Aorta (tissue), 5 donors: ENCODE measurements at regions of chr2 and their contacts with region 1.

Region 1: DNA sequence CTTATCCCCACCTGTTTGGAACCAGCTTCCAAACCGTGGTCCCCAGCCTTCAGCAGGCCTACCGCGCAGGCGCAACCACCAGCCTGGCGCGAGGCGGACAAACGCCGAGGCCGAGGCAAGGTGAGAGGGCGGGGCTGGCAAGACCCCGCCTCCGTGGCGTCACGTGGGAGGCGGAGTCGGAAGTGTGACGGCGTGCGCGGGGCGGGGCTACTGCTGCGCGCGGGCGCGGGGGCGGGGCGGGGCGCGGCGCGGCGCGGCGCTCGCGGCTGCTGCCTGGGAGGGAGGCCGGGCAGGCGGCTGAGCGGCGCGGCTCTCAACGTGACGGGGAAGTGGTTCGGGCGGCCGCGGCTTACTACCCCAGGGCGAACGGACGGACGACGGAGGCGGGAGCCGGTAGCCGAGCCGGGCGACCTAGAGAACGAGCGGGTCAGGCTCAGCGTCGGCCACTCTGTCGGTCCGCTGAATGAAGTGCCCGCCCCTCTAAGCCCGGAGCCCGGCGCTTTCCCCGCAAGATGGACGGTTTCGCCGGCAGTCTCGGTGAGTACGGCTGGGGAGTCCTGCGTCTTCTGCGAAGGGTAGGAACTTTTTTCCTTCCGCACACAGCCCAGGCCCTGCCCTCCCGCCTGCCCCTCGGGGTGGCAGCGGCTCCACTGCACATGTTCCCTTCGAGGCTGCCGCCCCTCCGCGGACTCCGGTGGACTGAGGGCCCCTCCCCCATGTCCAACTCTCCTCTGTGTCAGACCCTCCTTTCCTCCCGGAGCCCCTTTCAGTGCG is at the start of gene EML4:
- DNase-seq: peak; percentile 92 to 97
- ATAC-seq: peak; percentile 97
- H3K4me3 ChIP-seq: peak within 1 kb of the TSS; percentile 68 to 69
- H3K27ac ChIP-seq: peak within 1 kb of the TSS; percentile 1 to 62
- H3K4me1 ChIP-seq: peaks cover 0 to 4% of the 10 kb centered on the region in 2 donors
- H3K27me3 ChIP-seq: no peaks in the 10 kb centered on the region
- total RNA-seq, gene EML4: 41.9 to 51.9 TPM

Region 2: DNA sequence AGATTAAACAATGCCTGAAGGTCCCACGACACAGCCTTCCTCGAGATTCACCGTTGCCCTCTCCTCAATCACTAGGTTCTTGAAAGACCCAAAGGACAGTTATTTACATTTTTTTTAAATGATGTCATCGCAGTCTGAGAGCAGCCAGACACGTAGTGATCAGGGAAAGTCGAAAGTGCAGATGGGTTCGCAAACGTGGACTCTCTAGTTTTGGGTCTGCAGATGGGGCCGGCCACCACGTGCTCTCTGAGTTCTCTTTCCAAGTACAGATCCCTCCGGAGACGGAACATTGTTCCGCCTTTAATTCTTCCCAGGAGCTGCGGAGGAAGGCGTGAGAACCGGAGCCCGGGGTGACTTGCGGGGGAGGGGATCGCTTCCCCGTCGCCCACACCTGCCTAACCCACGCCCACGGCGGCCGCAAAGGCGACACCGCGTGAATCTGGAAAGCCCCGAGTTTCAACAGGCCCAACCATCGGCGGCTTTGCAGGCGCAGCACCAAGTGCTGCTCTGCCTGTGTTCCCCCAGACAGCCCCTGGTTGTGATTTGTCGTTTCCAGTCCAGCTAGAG is 67.2 kb before region 1 on chr2:
- intact Hi-C with region 1: loop called in 1 of 2 experiments (anchors 10 kb)
- DNase-seq: peak; percentile 78 to 86
- ATAC-seq: peak; percentile 64
- H3K4me3 ChIP-seq: no peak overlapping the region
- H3K27ac ChIP-seq: peak overlapping the region; percentile 1 to 78
- H3K4me1 ChIP-seq: no peaks in the 10 kb centered on the region
- H3K27me3 ChIP-seq: no peaks in the 10 kb centered on the region

Region 3: DNA sequence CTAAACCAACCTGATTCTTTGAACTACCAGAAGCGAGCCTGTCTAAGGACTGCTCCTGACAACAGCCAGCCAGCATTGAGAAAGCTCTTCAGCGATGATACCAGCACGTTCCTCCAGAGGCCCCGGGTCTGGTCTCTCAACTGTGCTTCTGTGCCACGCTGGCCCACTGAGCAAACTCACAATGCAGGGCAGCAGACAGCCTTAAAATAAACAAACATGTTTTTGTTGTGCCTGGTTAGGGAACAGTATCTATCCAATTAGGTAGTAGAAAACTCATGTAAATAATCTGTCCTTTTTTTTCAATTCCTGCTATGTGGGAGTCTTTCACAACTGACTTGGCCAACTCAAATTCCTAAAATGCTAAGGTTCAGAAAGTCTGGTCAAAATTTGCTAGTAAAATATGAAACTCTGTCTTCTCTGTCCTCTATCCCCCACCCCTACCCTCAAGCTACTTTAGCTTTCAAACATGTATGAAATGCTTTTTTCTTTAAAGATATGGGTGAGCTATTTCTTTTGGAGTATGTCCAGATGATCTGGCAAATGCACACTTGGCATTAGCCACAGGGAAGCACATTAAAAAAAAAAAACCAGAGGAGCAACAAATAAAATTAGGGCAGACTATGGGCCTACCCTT is 21.5 kb before region 1 on chr2:
- intact Hi-C with region 1: no loop called
- DNase-seq: no peak
- ATAC-seq: no peak
- H3K4me3 ChIP-seq: no peak overlapping the region
- H3K27ac ChIP-seq: peak overlapping the region in 1 of 2 donors; percentile 55
- H3K4me1 ChIP-seq: peaks cover 0 to 2% of the 10 kb centered on the region in 2 donors
- H3K27me3 ChIP-seq: no peaks in the 10 kb centered on the region

Region 4: DNA sequence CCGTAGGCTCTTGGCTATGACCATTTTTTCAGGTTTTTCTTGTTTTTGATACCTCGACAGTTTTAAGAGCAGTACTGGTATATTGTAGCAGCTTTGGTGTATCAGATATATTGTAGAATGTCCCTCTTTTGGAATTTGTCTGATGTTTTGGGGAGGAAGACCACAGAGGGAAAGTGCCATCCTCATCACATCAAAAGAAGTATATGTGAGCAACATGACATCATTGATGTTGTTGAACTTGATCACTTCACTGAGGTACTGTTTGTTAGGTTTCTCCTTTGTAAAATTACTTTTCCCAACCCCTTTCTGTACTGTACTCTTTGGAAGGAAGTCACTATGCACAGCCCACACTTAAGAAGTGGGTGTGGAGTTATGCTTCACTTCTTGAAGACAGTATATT is 40.9 kb after region 1 on chr2:
- intact Hi-C with region 1: no loop called
- DNase-seq: no peak
- ATAC-seq: no peak
- H3K4me3 ChIP-seq: no peak overlapping the region
- H3K27ac ChIP-seq: no peak overlapping the region
- H3K4me1 ChIP-seq: peaks cover 1 to 2% of the 10 kb centered on the region in 2 donors
- H3K27me3 ChIP-seq: no peaks in the 10 kb centered on the region

Region 5: DNA sequence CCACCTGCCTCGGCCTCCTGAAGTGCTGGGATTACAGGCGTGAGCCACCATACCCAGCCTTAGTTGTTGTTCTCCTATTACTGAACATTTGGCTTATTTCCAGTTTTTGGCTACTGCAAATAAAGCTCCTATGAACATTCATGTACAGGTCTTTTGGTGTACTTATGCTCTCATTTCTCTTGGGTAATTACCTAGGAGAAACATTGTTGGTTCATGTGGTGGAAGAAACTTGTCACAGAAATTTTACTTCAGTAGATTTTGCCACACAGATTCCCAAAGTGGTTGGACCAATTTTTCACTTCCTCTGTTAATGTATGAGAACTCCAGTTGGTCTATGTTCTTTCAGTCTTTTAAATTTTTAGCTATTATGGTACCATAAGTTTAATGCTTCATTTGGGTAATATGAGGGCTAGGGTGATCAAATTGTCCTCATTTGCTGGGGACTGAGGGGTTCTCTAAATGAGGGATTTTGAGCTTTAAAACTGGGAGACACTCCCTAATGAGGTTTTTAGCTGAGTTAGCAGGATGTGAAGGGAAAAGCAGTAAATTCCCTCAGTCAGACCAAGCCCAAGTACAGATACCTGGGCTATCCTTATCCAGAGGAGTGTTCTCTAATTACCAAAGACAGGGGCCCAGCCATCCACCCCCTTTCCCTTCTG is 433.1 kb after region 1 on chr2:
- intact Hi-C with region 1: no loop called
- DNase-seq: no peak
- ATAC-seq: no peak
- H3K4me3 ChIP-seq: no peak overlapping the region
- H3K27ac ChIP-seq: no peak overlapping the region
- H3K4me1 ChIP-seq: no peaks in the 10 kb centered on the region
- H3K27me3 ChIP-seq: no peaks in the 10 kb centered on the region